ENCODE measurements at regions of chr2 and their contacts with region 1.

Region 1: DNA sequence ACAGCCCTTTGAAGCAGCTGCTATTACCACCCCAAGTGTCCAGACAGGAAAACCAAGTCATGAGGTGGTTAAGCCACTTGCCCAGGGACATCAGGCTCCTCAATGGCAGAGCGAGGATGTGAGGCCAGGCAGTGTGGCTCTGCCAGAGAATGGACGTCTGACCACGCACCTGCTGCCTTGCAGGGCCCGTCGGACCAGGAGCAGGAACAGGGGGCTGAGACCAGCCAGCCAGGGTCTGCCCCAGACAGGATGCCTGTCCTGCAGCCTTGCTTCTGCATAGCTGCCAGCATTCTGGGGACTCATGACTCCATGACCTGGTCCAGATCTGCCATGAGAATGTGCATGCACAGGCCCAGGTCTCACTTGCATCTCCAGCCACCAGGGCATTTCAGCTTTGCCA is 52.0 kb downstream of the BCL2L11 start:
- DNase-seq: no peak
- H3K4me3 Mint-ChIP-seq: no peak overlapping the region
- H3K27ac Mint-ChIP-seq: no peak overlapping the region
- H3K4me1 Mint-ChIP-seq: peaks cover 24% of the 10 kb centered on the region
- H3K27me3 Mint-ChIP-seq: peaks cover 8% of the 10 kb centered on the region
- CTCF ChIP-seq: no peak

Region 2: DNA sequence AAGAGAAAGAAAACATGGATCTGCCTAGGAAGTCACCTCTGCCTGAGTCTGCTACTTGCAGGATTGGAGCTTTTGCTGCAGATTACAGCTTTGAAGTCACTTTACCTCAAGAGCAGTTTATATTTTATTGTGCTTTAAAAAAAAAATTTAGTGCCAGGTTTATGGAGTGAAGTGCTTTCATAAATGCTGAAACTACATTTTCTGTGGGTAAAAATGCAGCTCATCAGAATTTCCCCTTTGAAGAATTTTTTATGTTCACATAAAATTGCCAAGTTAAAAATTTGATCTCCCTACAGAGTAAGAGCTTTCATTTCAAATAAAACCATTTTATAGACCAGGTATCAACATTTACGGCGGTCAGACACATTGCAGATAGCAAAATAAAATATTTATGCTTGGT is 26.7 kb before region 1 on chr2:
- CTCF ChIA-PET with region 1: interaction called, 10 read pairs
- intact Hi-C with region 1: no loop called
- DNase-seq: no peak
- H3K4me3 Mint-ChIP-seq: no peak overlapping the region
- H3K27ac Mint-ChIP-seq: no peak overlapping the region
- H3K4me1 Mint-ChIP-seq: no peaks in the 10 kb centered on the region
- H3K27me3 Mint-ChIP-seq: no peaks in the 10 kb centered on the region
- CTCF ChIP-seq: no peak

Measured in Calu3 (cell line).